ENCODE measurements at regions of chr22 and their contacts with region 1.

Region 1: DNA sequence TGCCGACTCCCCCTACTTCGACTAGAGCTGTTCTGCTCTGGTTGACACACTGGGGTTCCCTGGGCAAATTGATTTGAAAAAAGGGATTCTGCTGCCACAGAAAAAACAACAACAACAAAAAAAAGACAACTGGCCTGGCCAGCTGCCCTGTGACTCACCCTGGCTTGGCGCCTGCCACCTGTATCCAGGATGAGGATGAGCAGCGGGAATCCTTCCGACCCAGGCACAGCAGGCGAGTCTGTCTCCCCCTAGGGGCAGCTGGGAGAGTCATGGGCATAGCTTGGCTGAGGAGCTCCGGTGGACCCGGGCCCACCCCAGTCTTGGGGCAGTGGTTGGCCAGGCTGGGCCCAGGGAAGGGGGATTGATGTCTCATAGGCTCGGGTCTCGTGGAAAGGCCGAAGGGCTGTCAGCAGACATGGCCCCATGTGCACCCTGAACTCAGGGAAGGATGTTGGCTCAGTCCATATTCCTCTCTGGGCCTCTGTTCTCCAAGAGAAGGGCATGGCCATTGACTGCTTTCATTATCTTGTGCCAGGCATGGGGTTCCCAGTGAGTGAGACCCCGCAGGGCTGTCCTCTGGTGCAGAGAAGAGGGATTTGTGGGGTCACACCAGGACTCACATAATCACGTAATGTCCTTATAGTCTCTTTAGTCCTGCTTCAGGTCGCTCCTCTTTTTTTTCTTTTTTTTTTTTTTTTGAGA is 10.4 kb upstream of the SUN2 start:
- DNase-seq: peak; percentile 79
- H3K4me3 ChIP-seq: no peak overlapping the region
- H3K27ac ChIP-seq: peak overlapping the region; percentile 7
- H3K4me1 ChIP-seq: peaks cover 42% of the 10 kb centered on the region
- H3K27me3 ChIP-seq: no peaks in the 10 kb centered on the region
- CTCF ChIP-seq: peak; percentile 94

Region 2: DNA sequence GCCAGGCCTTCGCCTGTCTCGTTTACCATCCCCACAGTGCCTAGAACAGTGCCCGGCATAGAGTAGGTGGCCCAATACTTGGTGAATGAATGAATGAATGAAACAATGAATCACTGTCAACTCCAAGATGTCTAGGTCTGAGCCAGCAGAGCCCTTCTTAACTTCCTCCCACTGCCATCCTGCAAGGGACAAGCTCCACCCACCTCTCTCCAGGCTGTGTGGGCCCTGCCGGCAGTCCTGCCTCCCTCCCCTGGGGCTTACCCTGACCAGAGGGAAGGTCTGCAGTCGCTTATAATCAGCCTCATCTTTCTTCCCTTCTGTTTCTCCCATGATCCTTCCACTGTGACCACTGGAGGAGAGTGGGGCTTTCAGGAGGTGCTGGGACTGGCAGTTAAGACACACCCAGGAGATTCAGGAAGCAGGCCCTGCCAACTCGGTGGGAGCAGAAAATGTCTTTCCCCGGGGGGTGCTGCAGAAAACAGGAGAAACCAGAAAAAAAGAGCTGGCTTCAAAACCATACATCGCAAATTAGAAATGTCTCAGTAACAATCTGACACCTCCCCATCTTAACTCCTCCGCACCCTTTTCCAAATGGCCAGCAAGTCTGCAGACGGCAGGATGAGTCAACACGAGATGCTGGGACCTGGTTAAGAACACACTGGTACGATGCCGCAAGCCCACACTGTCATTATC is 16.3 kb after region 1 on chr22:
- CTCF ChIA-PET with region 1: interaction called, 22 read pairs
- POLR2A ChIA-PET with region 1: interaction called, 12 read pairs
- intact Hi-C with region 1: no loop called
- DNase-seq: peak; percentile 90
- H3K4me3 ChIP-seq: peak overlapping the region; percentile 33
- H3K27ac ChIP-seq: peak overlapping the region; percentile 92
- H3K4me1 ChIP-seq: peaks cover 44% of the 10 kb centered on the region
- H3K27me3 ChIP-seq: no peaks in the 10 kb centered on the region
- CTCF ChIP-seq: no peak

Region 3: DNA sequence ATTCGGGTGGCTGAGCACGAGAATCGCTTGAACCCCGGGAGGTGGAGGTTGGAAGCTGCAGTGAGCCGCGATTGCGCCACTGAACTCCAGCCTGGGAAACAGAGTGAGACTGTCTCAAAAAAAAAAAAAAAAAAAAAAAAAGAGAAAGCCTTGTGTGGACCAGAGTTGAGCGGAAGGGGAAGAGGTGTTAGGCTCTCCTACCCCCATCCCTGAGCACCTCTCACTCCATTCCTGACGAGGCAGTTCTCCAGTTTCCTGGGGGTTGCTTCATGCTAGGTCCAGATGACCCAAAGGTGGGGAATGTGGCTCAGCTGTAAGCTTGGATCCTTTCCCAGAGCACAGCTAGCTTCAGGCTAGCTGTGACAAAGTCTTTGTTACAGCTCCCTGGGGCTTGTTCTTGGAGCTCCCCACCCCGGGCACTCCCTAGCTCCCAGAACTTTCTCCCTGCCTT is 36.5 kb after region 1 on chr22:
- CTCF ChIA-PET with region 1: interaction called, 18 read pairs
- POLR2A ChIA-PET with region 1: no interaction called
- intact Hi-C with region 1: loop called (anchors 5 kb)
- DNase-seq: peak; percentile 99
- H3K4me3 ChIP-seq: no peak overlapping the region
- H3K27ac ChIP-seq: peak overlapping the region; percentile 92
- H3K4me1 ChIP-seq: peaks cover 39% of the 10 kb centered on the region
- H3K27me3 ChIP-seq: no peaks in the 10 kb centered on the region
- CTCF ChIP-seq: no peak

Region 4: DNA sequence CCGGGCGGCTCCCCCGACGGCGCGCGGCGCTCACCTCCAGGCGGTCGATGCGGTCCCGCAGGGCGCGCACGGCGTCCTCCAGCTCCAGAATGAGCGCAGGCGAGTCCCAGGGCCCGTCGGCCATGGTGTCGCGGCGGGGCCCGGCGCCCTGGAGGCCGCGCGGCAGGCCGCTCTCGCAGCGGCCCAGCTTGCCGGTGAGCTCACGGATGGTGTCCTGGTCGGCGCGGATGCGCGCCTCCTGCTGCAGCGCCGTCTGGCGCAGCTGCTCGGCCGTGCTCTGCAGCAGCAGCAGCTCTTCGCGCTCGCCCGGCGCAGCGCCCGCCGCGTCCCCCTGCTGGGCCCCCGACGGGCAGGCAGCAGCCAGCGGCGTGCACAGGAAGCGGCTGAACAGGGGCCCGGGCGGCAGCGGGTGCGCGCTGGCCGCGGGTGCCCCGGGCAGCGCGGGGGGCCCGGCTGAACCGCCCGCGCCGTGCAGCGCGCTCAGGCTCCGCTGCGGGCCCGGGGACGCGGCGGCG is 77.0 kb after region 1 on chr22:
- CTCF ChIA-PET with region 1: interaction called, 27 read pairs
- POLR2A ChIA-PET with region 1: interaction called, 4 read pairs
- intact Hi-C with region 1: no loop called
- DNase-seq: peak; percentile 92
- H3K4me3 ChIP-seq: peak overlapping the region; percentile 98
- H3K27ac ChIP-seq: peak overlapping the region; percentile 90
- H3K4me1 ChIP-seq: peaks cover 33% of the 10 kb centered on the region
- H3K27me3 ChIP-seq: no peaks in the 10 kb centered on the region
- CTCF ChIP-seq: no peak; the same call in 1 of the 2 replicates

Region 5: DNA sequence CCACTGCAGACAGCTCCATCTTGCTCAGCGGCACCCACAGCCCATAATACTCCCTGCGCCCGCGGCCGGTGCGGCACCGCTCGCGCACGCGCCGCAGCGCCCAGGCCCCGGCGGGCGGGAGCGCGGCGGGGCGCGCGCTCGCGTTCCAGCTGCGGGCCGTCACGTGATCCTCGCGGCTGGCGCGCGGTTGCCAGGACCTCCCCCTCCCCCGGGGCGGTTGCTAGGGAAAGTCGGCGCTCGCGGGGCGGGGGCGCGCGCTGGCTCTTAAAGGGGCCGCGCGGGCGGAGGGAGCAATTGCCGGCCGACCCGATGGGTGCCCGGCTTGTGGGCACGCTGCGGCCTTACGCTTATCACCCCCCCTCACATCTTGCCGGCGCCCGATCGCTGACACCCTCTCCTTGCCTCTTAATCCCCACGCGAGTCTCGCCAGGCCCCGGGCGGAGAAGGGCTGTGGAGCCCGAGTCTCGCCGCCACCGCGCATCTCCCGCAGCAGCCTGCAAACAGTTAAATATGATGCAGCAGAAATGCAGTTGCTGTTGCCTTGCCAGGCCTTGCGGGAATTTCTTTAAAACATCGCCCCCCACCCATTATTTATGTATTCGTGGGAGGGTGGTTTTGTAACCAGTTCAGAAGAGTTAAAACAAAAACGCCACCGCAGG is 106.1 kb after region 1 on chr22 and contains the start of gene CBX6:
- CTCF ChIA-PET with region 1: interaction called, 24 read pairs
- POLR2A ChIA-PET with region 1: no interaction called
- intact Hi-C with region 1: loop called (anchors 1 kb)
- DNase-seq: peak; percentile 96
- H3K4me3 ChIP-seq: peak within 1 kb of the TSS; percentile 86
- H3K27ac ChIP-seq: peak within 1 kb of the TSS; percentile 93
- H3K4me1 ChIP-seq: peaks cover 35% of the 10 kb centered on the region
- H3K27me3 ChIP-seq: no peaks in the 10 kb centered on the region
- CTCF ChIP-seq: no peak
- total RNA-seq, gene CBX6: 111 and 119 TPM in 2 replicates

Region 6: DNA sequence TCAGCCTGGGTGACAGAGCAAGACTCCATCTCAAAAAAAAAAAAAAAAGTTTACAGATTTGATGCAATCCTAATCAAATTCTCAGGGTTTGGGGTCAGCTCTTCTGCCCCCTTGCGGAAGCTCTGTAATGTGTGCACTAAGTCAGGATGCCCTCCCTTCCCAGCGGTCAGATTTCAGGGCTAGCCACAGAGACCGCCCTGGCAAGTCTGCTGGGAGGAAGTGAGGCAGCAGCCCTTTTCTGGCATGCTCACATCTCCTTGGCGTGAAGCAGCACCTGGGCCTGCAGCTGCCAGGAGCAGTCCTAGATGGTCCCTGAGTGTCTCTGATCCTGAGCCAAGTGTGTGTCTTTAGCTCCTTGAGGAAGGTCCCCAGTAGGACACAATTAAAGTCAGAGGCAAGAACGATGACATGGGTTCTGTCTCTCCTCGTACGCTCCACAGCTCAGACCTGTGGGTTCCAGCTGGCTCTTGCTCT is 237.0 kb after region 1 on chr22:
- CTCF ChIA-PET with region 1: interaction called, 35 read pairs
- POLR2A ChIA-PET with region 1: no interaction called
- intact Hi-C with region 1: loop called (anchors 2 kb)
- DNase-seq: peak; percentile 78
- H3K4me3 ChIP-seq: no peak overlapping the region
- H3K27ac ChIP-seq: no peak overlapping the region
- H3K4me1 ChIP-seq: peaks cover 7% of the 10 kb centered on the region
- H3K27me3 ChIP-seq: no peaks in the 10 kb centered on the region
- CTCF ChIP-seq: peak; percentile 74

Region 7: DNA sequence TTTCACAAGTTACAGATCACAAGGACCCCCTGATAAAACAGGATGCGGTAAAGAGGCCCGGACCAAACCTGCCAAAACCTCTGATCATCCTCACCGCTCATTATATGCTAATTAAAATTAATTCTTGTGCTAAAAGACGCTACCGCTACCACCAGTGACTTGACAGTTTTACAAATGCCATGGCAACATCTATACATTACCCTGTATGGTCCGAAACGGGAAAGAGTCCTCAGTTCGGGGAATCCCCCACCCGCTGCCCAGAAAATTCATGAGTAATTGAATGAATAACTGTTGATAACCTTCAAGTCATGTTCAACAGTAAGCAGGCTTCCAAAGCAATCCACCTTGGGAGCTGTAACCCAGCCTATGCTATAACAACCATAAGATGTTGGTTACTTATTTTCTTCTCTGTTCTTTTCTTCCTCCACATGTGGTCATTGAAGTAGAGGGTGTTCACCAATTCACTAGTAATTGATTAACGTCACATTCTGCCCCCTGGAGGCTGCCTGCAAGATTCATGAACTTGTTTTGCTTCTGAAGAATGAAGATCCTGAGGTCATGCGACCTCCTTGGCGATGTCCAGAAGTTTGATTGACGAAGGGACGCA is 351.5 kb after region 1 on chr22:
- CTCF ChIA-PET with region 1: interaction called, 9 read pairs
- POLR2A ChIA-PET with region 1: no interaction called
- intact Hi-C with region 1: loop called (anchors 5 kb)
- DNase-seq: peak; percentile 64
- H3K4me3 ChIP-seq: no peak overlapping the region
- H3K27ac ChIP-seq: no peak overlapping the region
- H3K4me1 ChIP-seq: peaks cover 3% of the 10 kb centered on the region
- H3K27me3 ChIP-seq: no peaks in the 10 kb centered on the region
- CTCF ChIP-seq: peak; percentile 69

Region 8: DNA sequence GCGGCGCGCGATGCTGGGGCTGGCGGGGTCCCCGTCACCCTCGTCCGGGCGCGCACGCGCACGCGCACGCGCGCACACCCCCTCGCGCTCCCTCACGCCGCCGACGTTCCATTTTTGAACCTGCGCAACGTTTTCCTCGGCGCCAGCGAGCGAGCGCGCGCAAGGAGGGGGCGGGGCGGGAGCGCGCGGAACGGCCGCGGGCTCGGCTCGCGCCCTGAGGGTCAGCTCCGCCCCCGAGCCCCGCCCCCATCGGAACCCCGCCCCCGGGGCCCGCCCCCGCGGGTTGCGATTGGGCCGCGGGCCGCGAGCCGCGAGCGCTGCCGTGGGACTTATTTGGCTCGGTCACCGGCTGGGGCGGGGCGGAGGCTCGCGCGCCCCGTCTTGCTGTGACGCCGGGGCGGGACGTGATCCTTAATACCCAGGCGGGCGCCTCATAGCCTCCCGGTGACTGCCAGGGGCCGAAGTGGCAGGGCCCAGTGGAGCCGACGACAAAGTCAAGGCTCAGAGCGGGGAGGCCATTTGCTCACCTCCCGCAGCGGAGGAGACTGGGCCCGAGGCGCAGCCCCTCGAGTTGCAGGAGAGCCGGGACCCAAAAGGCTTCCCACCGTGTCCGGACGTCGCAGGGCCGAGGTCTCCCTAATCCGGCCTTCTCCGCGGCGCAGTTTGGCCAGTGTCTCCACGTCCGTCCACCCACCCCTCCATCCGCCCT is 386.4 kb after region 1 on chr22 and contains the start of gene CBX7:
- CTCF ChIA-PET with region 1: no interaction called
- POLR2A ChIA-PET with region 1: no interaction called
- intact Hi-C with region 1: no loop called
- DNase-seq: peak; percentile 89
- H3K4me3 ChIP-seq: peak within 1 kb of the TSS; percentile 54
- H3K27ac ChIP-seq: peak within 1 kb of the TSS; percentile 7
- H3K4me1 ChIP-seq: peaks cover 22% of the 10 kb centered on the region
- H3K27me3 ChIP-seq: peaks cover 25% of the 10 kb centered on the region
- CTCF ChIP-seq: no peak
- total RNA-seq, gene CBX7: 2.8 and 3.8 TPM in 2 replicates